ENCODE measurements at regions of chr2 and their contacts with region 1.

Region 1: GRCh38 chr2:18219676-18220075 is 340.8 kb downstream of the RDH14 start:
- DNase-seq: no peak
- H3K4me3 ChIP-seq: no peak overlapping the region
- H3K27ac ChIP-seq: no peak overlapping the region
- H3K4me1 ChIP-seq: peaks cover 3% of the 10 kb centered on the region
- H3K27me3 ChIP-seq: no peaks in the 10 kb centered on the region
- CTCF ChIP-seq: peak; percentile 29 to 57

Region 2: GRCh38 chr2:18299423-18300212 is 79.9 kb after region 1 on chr2:
- CTCF ChIA-PET with region 1: no interaction called
- dilution Hi-C with region 1: no loop called
- in situ Hi-C with region 1: no loop called
- intact Hi-C with region 1: loop called (anchors 2 kb)
- DNase-seq: peak; percentile 84
- H3K4me3 ChIP-seq: peak overlapping the region in 2 of 3 experiments; percentile 40 to 53
- H3K27ac ChIP-seq: peak overlapping the region; percentile 77
- H3K4me1 ChIP-seq: peaks cover 32% of the 10 kb centered on the region
- H3K27me3 ChIP-seq: no peaks in the 10 kb centered on the region
- CTCF ChIP-seq: no peak

Measured in mammary epithelial cell (primary cell).